Transverse colon (tissue), 4 donors: ENCODE measurements at regions of chr20 and their contacts with region 1.

Region 1: GRCh38 chr20:25865380-25866118 is 168.9 kb upstream of the ZNF337 start:
- DNase-seq: peak; percentile 71
- H3K4me3 ChIP-seq: peak overlapping the region in 3 of 4 donors; percentile 4 to 46 (median 13)
- H3K27ac ChIP-seq: no peak overlapping the region
- H3K4me1 ChIP-seq: peaks cover 11 to 43% (median 39%) of the 10 kb centered on the region in 4 donors
- H3K27me3 ChIP-seq: peaks cover 73% of the 10 kb centered on the region
- CTCF ChIP-seq: no peak
- EP300 ChIP-seq: no peak
- POLR2A ChIP-seq: no peak

Region 2: DNA sequence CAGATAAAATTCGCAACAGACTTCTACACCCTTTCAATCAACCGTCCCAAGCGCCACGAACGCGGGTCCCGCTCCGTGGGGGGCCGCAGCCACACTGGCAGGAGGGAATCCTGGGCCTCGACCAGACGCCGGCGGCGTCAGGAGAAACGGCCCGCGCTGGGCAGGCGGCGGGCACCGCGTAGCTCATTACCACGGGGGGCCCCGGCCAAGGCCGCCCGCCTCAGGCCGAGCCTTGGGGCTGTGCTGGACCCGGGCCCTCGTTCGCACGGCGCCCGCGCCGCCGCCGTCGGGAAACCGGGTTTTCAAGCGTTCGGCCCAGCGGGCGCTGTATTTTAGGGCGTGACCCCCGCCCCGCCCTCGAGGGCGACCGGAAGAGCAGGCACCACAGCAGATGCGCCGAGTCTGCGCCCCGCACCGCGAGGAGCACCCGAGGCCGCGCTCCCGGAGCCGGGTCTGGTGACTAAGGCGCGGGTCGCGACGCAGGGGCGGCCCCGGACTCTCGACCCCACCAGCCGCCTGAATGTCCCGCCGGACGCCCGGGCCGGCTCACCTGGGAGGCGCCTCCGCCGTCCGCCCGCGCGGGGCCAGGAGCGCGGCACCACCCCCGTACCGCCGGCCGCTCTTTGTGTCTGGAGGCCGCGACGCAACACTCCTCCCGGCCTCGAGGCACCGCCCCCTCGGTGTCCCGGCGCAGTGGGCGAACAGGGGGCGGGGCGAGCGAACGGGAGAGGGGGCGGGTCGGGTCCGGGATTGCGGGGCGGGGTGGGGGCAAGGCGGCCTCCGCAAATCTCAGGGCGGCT is 280.4 kb before region 1 on chr20 and contains the start of gene NINL:
- in situ Hi-C with region 1: loop called in 1 of 4 experiments (anchors 25 kb)
- intact Hi-C with region 1: no loop called
- DNase-seq: peak; percentile 47
- H3K4me3 ChIP-seq: peak within 1 kb of the TSS; percentile 60 to 75 (median 62)
- H3K27ac ChIP-seq: peak within 1 kb of the TSS; percentile 45 to 74 (median 68)
- H3K4me1 ChIP-seq: peaks cover 0 to 11% (median 10%) of the 10 kb centered on the region in 4 donors
- H3K27me3 ChIP-seq: peaks cover 15% of the 10 kb centered on the region
- CTCF ChIP-seq: no peak
- EP300 ChIP-seq: no peak
- POLR2A ChIP-seq: peak; percentile 30
- total RNA-seq, gene NINL: 3.1 to 9.7 (median 5.7) TPM

Region 3: GRCh38 chr20:25696384-25697131 is 169.0 kb before region 1 on chr20 and contains the start of gene ZNF337:
- in situ Hi-C with region 1: loop called in 1 of 4 experiments (anchors 25 kb)
- intact Hi-C with region 1: no loop called
- DNase-seq: peak; percentile 95
- H3K4me3 ChIP-seq: peak within 1 kb of the TSS; percentile 46 to 91 (median 86)
- H3K27ac ChIP-seq: peak within 1 kb of the TSS; percentile 79 to 93 (median 92)
- H3K4me1 ChIP-seq: peaks cover 8 to 15% (median 13%) of the 10 kb centered on the region in 4 donors
- H3K27me3 ChIP-seq: no peaks in the 10 kb centered on the region
- CTCF ChIP-seq: peak in 3 of 5 experiments; percentile 11 to 23 (median 20)
- EP300 ChIP-seq: no peak
- POLR2A ChIP-seq: peak; percentile 68
- total RNA-seq, gene ZNF337: 5.2 to 17.1 (median 11.0) TPM

Region 4: GRCh38 chr20:25987073-25987927 is 121.8 kb after region 1 on chr20:
- in situ Hi-C with region 1: loop called in 1 of 4 experiments (anchors 25 kb)
- intact Hi-C with region 1: no loop called
- DNase-seq: peak; percentile 27
- H3K4me3 ChIP-seq: peak overlapping the region in 3 of 4 donors; percentile 20 to 37 (median 21)
- H3K27ac ChIP-seq: no peak overlapping the region
- H3K4me1 ChIP-seq: no peaks in the 10 kb centered on the region
- H3K27me3 ChIP-seq: no peaks in the 10 kb centered on the region
- CTCF ChIP-seq: peak; percentile 14 to 29 (median 19)
- EP300 ChIP-seq: no peak
- POLR2A ChIP-seq: no peak